Endothelial cell of umbilical vein (primary cell): ENCODE measurements at regions of chr1 and their contacts with region 1.

Region 1: GRCh38 chr1:160046494-160047110 is 14.8 kb upstream of the PIGM start:
- DNase-seq: peak; percentile 21
- H3K4me3 ChIP-seq: no peak overlapping the region
- H3K27ac ChIP-seq: no peak overlapping the region
- H3K4me1 ChIP-seq: no peaks in the 10 kb centered on the region
- H3K27me3 ChIP-seq: peaks cover 16 to 28% of the 10 kb centered on the region in 2 experiments
- CTCF ChIP-seq: peak; percentile 38 to 41
- POLR2A ChIP-seq: no peak

Region 2: DNA sequence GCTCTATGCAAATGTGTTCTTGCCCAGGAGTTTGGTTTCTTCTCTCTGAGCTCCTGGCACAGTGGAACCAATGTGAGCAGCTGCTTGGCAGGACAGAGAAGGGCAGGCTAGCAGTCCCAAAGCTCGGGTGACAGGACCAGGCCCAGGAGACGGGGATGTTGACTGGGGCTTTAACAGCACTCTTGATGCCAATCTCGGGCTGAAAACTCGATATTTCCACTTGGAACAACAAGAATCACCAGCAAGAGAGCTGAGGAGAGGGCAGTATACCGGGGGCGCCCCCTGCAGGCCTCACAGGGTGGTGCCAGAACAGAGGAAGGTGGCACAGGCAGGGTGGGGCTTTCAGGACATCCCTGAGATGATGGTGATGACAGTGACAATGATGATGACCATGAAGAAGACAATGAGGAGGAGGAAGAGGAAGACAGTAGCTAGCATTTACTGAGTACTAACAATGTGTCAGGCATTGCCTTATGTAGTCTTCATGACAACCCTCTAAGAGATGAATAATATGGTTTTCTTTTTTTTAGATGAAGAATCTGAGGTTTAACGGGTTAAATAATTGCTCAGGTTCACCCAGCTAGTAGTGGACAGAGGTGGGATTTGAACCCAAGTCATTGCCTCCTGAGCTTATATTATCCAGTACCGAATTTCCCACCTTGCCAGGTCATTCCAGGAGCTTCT is 32.1 kb after region 1 on chr1:
- CTCF ChIA-PET with region 1: interaction called, 23 read pairs
- POLR2A ChIA-PET with region 1: no interaction called
- dilution Hi-C with region 1: no loop called
- intact Hi-C with region 1: loop called (anchors 1 kb)
- DNase-seq: peak; percentile 26
- H3K4me3 ChIP-seq: no peak overlapping the region
- H3K27ac ChIP-seq: no peak overlapping the region
- H3K4me1 ChIP-seq: no peaks in the 10 kb centered on the region
- H3K27me3 ChIP-seq: peaks cover 44 to 56% of the 10 kb centered on the region in 2 experiments
- CTCF ChIP-seq: peak; percentile 80 to 87
- POLR2A ChIP-seq: no peak

Region 3: DNA sequence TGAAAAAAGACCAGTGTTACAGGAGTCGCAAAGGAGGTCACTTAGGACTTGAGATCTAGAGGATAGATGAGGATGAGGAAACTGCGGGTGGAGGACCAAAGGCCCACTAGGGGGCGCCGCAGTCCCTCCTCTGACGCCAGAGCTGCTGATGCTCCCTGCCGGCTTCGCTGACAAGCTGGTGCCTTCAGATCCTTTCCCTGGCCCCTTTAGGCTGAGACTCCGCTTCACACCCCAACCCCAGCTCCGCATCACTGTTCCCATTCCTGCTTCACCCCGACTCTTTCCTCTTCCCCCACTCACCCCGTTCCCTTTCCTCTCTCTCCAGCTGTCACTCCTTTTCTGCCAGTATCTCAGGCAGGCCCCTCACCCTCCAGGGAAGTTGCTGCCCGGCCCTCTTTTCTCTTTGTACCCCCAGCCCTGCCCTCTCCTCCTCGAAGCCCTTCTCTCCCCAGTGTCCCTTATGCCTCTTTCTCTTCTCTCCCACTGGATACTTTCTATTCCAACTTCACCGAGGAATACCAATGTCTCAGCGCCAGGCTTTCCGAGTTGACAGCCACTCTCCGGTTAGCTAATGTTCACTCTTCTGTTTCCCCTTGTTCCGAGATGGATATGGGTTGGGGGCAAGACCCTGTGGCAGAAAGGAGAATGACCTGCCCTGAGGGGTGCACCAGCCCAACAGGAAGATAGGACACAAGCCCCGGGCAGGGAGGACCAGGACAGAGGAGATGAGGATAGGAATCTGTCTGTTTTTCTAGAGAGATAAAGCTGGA is 39.3 kb after region 1 on chr1:
- CTCF ChIA-PET with region 1: interaction called, 16 read pairs
- POLR2A ChIA-PET with region 1: no interaction called
- dilution Hi-C with region 1: no loop called
- intact Hi-C with region 1: no loop called
- DNase-seq: peak; percentile 65
- H3K4me3 ChIP-seq: no peak overlapping the region
- H3K27ac ChIP-seq: no peak overlapping the region
- H3K4me1 ChIP-seq: no peaks in the 10 kb centered on the region
- H3K27me3 ChIP-seq: peaks cover 35 to 37% of the 10 kb centered on the region in 2 experiments
- CTCF ChIP-seq: peak; percentile 82 to 99
- POLR2A ChIP-seq: no peak

Region 4: GRCh38 chr1:160205242-160206035 is 158.8 kb after region 1 on chr1 and contains the start of gene PEA15:
- CTCF ChIA-PET with region 1: no interaction called
- POLR2A ChIA-PET with region 1: no interaction called
- dilution Hi-C with region 1: no loop called
- intact Hi-C with region 1: no loop called
- DNase-seq: peak; percentile 54
- H3K4me3 ChIP-seq: peak within 1 kb of the TSS; percentile 55 to 81 (median 72)
- H3K27ac ChIP-seq: peak within 1 kb of the TSS; percentile 73
- H3K4me1 ChIP-seq: peaks cover 45% of the 10 kb centered on the region
- H3K27me3 ChIP-seq: no peaks in the 10 kb centered on the region
- CTCF ChIP-seq: no peak
- POLR2A ChIP-seq: no peak
- total RNA-seq, gene PEA15: 250 and 270 TPM in 2 replicates